ENCODE measurements at regions of chr13 and their contacts with region 1.

Region 1: GRCh38 chr13:26698392-26699196 is 62.0 kb downstream of the GPR12 start:
- DNase-seq: peak; percentile 88

Region 2: GRCh38 chr13:26482451-26483197 is 216.0 kb before region 1 on chr13:
- intact Hi-C with region 1: loop called (anchors 10 kb)
- DNase-seq: peak; percentile 38